Psoas muscle (tissue), 8 donors: ENCODE measurements at regions of chrX and their contacts with region 1.

Region 1: GRCh38 chrX:15059474-15059873 is 186.3 kb downstream of the MOSPD2 start:
- DNase-seq: no peak
- ATAC-seq: no peak
- H3K4me3 ChIP-seq: no peak overlapping the region
- H3K27ac ChIP-seq: no peak overlapping the region
- H3K4me1 ChIP-seq: no peaks in the 10 kb centered on the region
- H3K27me3 ChIP-seq: no peaks in the 10 kb centered on the region
- CTCF ChIP-seq: no peak

Region 2: GRCh38 chrX:14872851-14873675 is 186.4 kb before region 1 on chrX and contains the starts of genes FANCB and MOSPD2:
- intact Hi-C with region 1: no loop called
- DNase-seq: peak; percentile 92 to 97
- ATAC-seq: peak; percentile 97 to 100 (median 99)
- H3K4me3 ChIP-seq: peak within 1 kb of the TSS; percentile 79
- H3K27ac ChIP-seq: peak within 1 kb of the TSS; percentile 74
- H3K4me1 ChIP-seq: no peaks in the 10 kb centered on the region
- H3K27me3 ChIP-seq: no peaks in the 10 kb centered on the region
- CTCF ChIP-seq: no peak
- total RNA-seq, gene FANCB: 0.11 to 0.32 (median 0.19) TPM
- total RNA-seq, gene MOSPD2: 2.2 to 3.5 (median 3.3) TPM

Region 3: DNA sequence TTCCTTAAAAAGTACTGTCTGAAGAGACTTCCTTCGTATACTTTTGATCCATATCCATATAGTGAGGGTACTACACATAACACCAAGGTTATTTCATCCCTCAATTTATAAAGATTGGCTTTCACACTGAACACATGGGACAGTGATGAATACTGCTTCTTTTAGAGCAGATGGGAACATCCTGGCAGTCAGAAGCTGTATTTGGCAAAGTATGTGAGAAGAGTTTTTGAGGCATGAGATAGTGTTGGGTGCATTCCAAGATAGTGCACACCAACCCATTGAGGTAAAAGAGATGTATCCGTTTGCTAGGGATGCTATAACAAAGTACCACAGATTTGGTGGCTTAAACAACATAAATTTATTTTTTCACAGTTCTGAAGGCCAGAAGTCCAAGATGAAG is 45.2 kb before region 1 on chrX:
- intact Hi-C with region 1: loop called in 1 of 2 experiments (anchors 10 kb)
- DNase-seq: no peak
- ATAC-seq: no peak
- H3K4me3 ChIP-seq: no peak overlapping the region
- H3K27ac ChIP-seq: no peak overlapping the region
- H3K4me1 ChIP-seq: no peaks in the 10 kb centered on the region
- H3K27me3 ChIP-seq: peaks cover 0 to 6% (median 0%) of the 10 kb centered on the region in 3 donors
- CTCF ChIP-seq: no peak

Region 4: GRCh38 chrX:15781961-15782699 is 722.7 kb after region 1 on chrX:
- intact Hi-C with region 1: no loop called
- DNase-seq: no peak
- ATAC-seq: no peak
- H3K4me3 ChIP-seq: no peak overlapping the region
- H3K27ac ChIP-seq: no peak overlapping the region
- H3K4me1 ChIP-seq: no peaks in the 10 kb centered on the region
- H3K27me3 ChIP-seq: no peaks in the 10 kb centered on the region
- CTCF ChIP-seq: no peak